Sigmoid colon (tissue), 7 donors: ENCODE measurements at regions of chr14 and their contacts with region 1.

Region 1: DNA sequence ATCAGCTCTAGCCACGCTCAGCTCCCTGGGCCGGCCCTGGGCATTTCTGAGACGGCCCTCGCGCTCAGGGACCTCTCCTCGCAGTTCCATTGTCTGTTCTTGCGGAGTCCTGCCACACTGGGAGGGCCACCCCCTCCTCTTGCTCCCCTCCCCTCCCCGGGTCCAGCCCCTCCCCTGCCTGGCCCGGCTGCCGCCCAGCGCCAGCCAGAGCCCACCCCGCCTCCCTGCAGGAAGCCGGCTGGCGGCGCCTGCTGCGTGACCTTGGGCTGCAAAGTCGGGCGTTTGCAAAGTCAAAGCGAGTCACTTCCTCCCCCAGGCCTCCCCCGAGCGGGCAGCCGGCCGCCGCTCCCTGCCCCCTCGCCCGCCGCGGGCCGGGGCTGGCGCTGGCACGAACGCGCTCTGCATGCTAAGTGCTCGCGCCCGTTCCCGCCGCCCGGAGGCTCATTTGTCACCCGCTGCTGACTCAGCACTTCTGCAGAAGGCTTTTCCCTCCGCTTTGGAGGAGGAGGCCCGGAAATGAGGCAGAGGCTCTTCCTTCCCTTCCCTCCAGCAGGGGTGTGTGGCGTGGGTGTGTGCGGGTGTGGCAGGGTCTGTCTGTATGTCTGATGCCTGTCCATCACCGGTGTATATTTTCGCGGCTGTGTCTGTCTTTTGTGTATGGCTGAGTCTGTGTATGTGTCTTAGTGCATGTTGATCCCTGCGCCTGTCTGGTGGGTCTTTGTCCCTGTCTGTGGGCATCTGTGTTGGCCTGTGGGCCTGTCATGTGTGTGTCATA is 72.0 kb downstream of the IRF2BPL start:
- DNase-seq: peak; percentile 95
- H3K4me3 ChIP-seq: peak overlapping the region; percentile 21 to 50 (median 42)
- H3K27ac ChIP-seq: peak overlapping the region; percentile 91 to 97 (median 96)
- H3K4me1 ChIP-seq: peaks cover 0 to 83% (median 77%) of the 10 kb centered on the region in 4 donors
- H3K27me3 ChIP-seq: no peaks in the 10 kb centered on the region
- CTCF ChIP-seq: peak in 3 of 4 experiments; percentile 27 to 33 (median 27)
- EP300 ChIP-seq: peak in 2 of 4 donors; percentile 22
- POLR2A ChIP-seq: no peak

Region 2: GRCh38 chr14:76687611-76688382 is 268.7 kb before region 1 on chr14:
- intact Hi-C with region 1: no loop called
- DNase-seq: no peak
- H3K4me3 ChIP-seq: no peak overlapping the region
- H3K27ac ChIP-seq: no peak overlapping the region
- H3K4me1 ChIP-seq: no peaks in the 10 kb centered on the region
- H3K27me3 ChIP-seq: no peaks in the 10 kb centered on the region
- CTCF ChIP-seq: no peak
- EP300 ChIP-seq: no peak
- POLR2A ChIP-seq: no peak

Region 3: DNA sequence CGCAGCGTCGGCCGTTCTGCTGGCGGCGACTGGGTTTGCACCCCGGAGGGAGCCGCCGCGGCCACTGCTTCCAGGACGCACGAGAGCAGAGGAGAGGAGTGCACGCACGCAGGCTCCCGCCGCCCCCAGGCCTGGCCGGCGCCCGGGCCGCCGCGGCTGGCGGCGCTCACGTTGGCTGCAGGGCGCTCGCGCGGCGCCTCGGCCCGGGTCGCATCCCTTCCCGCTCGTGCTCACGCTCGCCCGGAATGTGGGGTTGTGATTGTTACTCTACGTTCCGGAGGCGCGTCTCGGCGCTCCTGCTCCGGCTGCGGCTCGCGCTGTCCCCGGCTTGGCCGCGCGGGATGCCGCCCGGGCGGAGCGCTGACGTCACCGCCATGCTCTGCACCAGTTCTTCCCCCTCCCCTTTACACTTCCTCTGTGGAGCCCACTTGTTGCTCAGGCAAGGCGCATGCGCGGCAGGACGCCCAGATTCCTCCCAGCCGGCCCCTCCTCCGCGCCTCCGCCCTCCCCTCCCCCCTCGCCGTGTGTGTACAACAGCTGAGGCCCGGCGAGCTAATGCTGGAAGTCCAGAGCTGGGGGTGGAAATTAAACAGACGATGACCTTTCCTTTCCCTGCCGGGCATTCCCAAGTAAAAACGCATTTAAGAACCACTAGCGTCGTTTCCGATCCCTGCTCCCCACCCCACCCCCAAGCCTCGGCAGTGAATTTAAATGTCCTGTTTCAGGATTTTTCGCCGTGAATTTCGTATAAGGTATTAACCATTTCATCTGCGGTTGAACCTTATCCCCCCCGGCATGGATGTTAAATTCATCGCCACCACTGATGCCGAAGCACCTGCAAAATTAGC is 72.1 kb after region 1 on chr14 and contains the start of gene IRF2BPL:
- intact Hi-C with region 1: loop called (anchors 2 kb)
- DNase-seq: peak; percentile 100
- H3K4me3 ChIP-seq: peak within 1 kb of the TSS; percentile 85 to 96 (median 91)
- H3K27ac ChIP-seq: peak within 1 kb of the TSS; percentile 97 to 100 (median 100)
- H3K4me1 ChIP-seq: peaks cover 0 to 69% (median 52%) of the 10 kb centered on the region in 4 donors
- H3K27me3 ChIP-seq: no peaks in the 10 kb centered on the region
- CTCF ChIP-seq: no peak
- EP300 ChIP-seq: peak in 3 of 4 donors; percentile 71 to 94 (median 80)
- POLR2A ChIP-seq: peak; percentile 86 to 92
- total RNA-seq, gene IRF2BPL: 34.7 to 63.1 (median 57.9) TPM

Region 4: GRCh38 chr14:77040059-77040740 is 83.7 kb after region 1 on chr14:
- intact Hi-C with region 1: loop called (anchors 5 kb)
- DNase-seq: peak; percentile 100
- H3K4me3 ChIP-seq: peak overlapping the region; percentile 6 to 37 (median 32)
- H3K27ac ChIP-seq: peak overlapping the region; percentile 96 to 100 (median 98)
- H3K4me1 ChIP-seq: peaks cover 0 to 90% (median 86%) of the 10 kb centered on the region in 4 donors
- H3K27me3 ChIP-seq: no peaks in the 10 kb centered on the region
- CTCF ChIP-seq: no peak
- EP300 ChIP-seq: peak; percentile 41 to 70 (median 54)
- POLR2A ChIP-seq: no peak